H1 (cell line): ENCODE measurements at regions of chr6 and their contacts with region 1.

Region 1: DNA sequence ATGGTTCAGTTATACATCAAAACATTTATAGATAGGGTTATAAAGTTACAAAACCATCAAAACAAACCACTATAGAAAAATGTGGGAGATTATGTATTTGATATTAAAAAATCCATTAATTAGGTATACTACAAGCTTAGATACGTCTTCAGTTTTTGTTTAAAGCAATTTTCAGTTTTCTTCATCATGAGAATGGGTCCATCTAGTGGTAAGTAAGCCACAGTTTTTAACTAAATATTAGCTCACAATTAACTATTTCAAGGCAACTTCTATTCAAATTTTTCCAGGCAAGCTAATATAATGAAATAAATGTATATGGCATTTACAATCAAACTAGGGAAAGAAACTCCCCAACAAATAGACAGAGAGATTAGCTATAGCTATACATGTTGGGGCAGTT is 44.4 kb downstream of the RNGTT start:
- DNase-seq: no peak
- H3K4me3 ChIP-seq: no peak overlapping the region
- H3K27ac ChIP-seq: no peak overlapping the region
- H3K4me1 ChIP-seq: no peaks in the 10 kb centered on the region; a peak in 1 of 7 replicates
- H3K27me3 ChIP-seq: no peaks in the 10 kb centered on the region
- CTCF ChIP-seq: no peak
- EP300 ChIP-seq: no peak
- POLR2A ChIP-seq: no peak
- RAD21 ChIP-seq: no peak; a peak in 2 of 4 replicates

Region 2: DNA sequence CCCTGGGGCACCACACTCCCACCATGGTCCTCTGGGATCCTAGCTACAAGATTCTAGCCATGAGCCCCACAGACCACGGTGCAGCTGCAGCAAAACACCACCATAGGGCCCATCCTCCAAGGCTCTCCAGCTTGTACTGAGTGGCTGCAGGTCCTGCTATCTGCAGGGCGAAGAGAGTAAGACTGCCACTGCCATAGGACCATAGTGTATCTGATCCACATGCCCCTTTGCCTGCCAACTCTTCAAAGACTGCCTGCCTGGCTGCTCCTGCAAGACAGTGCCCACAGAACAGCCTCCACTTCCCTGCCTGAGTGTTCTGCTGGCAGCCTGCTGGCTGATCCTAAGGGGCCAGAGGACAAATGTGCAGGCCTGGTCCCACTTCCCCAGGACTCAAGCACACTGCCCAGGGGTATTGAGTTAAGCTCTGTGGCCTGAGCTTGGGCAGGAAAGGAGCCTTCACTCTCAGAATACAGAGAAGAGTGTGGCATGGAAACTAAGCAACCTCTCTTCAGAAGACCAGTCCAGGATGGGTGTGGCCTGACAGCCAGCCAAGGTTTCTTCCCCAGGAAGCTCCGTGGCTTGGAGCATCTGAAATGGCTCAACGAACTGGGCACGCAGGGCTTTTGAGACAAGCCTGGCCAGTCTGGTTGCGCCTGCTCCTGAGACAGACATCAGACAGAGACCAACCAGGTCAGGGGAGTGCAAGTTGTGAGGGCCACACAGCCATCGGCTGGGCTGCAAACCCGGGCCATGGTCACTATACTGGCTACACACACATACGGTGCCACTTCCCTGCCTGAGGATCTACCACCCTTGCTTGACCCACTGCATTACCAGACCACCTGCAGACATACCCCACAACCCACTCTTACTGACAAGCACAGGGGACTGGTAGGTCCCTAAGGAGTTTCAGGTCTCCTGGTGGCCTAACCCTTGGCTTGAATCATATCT is 10.2 kb before region 1 on chr6:
- CTCF ChIA-PET with region 1: interaction called, 14 read pairs
- POLR2A ChIA-PET with region 1: no interaction called
- DNase-seq: no peak
- H3K4me3 ChIP-seq: no peak overlapping the region
- H3K27ac ChIP-seq: no peak overlapping the region
- H3K4me1 ChIP-seq: peaks cover 0 to 3% (median 1%) of the 10 kb centered on the region in 4 experiments; a peak in 4 of 7 replicates
- H3K27me3 ChIP-seq: no peaks in the 10 kb centered on the region
- CTCF ChIP-seq: no peak
- EP300 ChIP-seq: no peak
- POLR2A ChIP-seq: no peak
- RAD21 ChIP-seq: no peak